Mammary epithelial cell (primary cell): ENCODE measurements at regions of chr15 and their contacts with region 1.

Region 1: DNA sequence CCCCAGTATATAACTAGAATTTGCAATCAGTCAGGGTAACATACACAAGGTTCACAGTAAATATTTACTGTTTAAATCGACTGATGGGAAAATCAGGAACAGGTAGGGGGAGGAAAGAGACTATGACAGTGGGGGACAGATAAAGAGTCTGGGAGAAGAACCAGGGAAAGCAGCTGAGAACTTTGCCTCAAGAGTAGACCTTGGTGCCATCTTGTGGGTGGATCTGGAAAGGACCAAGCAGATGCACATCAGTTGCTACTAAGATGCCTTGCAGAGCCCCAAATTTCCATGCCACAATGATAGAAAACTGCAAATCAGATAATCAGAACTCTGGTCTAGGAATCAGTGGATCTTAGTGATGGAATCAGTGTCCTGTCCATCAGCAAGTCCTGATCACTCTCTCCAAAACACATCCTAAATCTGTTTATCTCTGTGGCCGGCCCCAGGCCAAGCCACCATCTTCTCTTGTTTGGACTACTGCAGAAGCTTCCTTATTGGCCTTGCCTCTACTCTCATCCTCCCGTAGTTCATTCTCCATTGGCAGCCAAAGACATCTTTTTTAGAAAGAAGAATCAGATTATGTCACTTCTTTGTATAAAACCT is 62.7 kb downstream of the PDE8A start:
- DNase-seq: peak; percentile 40
- H3K4me3 ChIP-seq: no peak overlapping the region
- H3K27ac ChIP-seq: no peak overlapping the region
- H3K4me1 ChIP-seq: no peaks in the 10 kb centered on the region
- H3K27me3 ChIP-seq: no peaks in the 10 kb centered on the region
- CTCF ChIP-seq: peak; percentile 67 to 76

Region 2: DNA sequence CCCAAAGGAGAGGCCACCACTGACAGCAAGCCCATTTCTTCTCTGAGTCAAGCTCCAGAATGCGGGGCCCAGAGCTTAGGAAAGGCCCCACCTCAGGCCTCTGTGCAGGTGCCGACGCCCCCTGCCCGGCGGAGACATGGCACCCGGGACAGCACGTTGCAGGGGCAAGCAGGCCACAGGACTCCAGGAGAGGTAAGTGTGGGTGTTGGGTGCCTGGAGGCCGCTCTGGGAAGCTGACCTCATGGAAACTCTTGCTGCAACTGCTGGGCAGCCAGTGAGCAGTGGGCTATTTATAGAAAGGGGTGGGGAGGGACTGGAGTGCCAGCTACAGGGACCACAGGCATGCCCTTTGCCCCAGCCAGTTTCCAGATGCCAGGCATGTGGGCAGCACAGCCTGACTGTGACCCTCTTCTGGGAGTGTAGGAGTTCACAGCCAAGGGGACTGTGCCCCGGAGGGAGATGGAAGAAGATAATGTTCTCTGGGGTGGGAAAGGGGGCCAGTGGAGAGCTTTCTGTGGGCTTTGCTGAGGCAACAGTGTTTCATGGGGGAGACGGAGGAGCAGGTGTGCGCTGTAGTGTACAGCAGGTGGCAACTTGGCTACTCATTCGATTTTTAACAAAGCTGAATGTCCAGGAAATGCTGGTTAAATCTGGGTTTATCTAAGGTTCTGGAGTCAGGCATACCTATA is 203.5 kb before region 1 on chr15:
- CTCF ChIA-PET with region 1: no interaction called
- dilution Hi-C with region 1: no loop called
- in situ Hi-C with region 1: no loop called
- intact Hi-C with region 1: loop called (anchors 10 kb)
- DNase-seq: peak; percentile 12
- H3K4me3 ChIP-seq: no peak overlapping the region
- H3K27ac ChIP-seq: no peak overlapping the region
- H3K4me1 ChIP-seq: no peaks in the 10 kb centered on the region
- H3K27me3 ChIP-seq: no peaks in the 10 kb centered on the region
- CTCF ChIP-seq: no peak

Region 3: DNA sequence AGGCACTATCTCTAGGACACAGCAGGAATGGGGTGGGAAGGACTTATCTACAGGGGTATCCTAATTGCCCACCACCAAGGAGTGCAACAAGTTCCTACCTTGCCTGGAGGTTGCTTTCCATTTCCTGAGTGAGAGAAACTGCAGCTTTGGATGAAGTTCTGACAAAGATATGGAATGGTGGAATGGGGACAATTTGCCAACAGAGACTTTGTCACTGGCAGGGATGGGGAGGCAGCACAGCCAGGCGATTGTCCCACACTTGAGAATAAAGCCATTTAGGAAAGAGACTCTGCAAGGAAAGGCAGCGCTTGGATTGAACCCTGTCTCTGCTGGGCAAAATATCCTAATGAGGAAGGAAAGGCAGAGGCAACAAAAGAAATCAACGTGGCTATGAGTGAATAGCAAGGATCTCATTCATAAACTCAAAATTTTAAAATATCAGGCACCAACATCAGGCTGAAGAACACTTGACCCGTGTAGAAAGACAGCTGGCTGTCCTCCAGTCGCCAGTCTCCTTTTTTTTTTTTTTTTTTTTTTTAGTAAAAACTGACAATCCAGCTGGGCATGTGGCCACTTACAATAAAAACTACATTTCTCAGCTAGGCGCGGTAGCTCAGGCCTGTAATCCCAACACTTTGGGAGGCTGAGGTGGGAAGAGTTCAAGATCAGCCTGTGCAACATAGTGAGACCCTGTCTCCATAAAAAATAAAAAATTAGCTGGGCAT is 94.3 kb before region 1 on chr15:
- CTCF ChIA-PET with region 1: no interaction called
- dilution Hi-C with region 1: loop called (anchors 5 kb)
- in situ Hi-C with region 1: loop called in 1 of 2 experiments (anchors 5 kb)
- intact Hi-C with region 1: loop called (anchors 1 kb)
- DNase-seq: no peak
- H3K4me3 ChIP-seq: no peak overlapping the region
- H3K27ac ChIP-seq: no peak overlapping the region
- H3K4me1 ChIP-seq: peaks cover 8% of the 10 kb centered on the region
- H3K27me3 ChIP-seq: no peaks in the 10 kb centered on the region
- CTCF ChIP-seq: no peak

Region 4: DNA sequence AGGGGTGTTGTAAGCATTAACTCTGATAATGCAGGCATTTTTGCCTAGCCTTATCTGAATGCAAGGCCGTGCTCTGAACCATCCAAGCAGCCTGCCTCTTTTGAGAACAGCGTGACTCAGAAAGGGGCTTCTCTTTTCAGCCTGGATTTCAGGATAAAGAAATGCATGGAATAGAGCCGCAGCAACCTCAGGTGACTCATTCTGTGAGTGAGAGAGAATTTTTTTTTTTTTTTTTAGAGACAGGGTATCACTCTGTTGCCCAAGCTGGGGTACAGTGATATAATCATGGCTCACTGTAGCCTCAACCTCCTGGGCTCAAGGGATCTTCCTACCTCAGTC is 83.3 kb before region 1 on chr15:
- CTCF ChIA-PET with region 1: no interaction called
- dilution Hi-C with region 1: no loop called
- in situ Hi-C with region 1: loop called in 1 of 2 experiments (anchors 5 kb)
- intact Hi-C with region 1: no loop called
- DNase-seq: peak; percentile 44
- H3K4me3 ChIP-seq: no peak overlapping the region
- H3K27ac ChIP-seq: no peak overlapping the region
- H3K4me1 ChIP-seq: no peaks in the 10 kb centered on the region
- H3K27me3 ChIP-seq: no peaks in the 10 kb centered on the region
- CTCF ChIP-seq: no peak

Region 5: GRCh38 chr15:84981054-84981710 is 63.2 kb before region 1 on chr15:
- CTCF ChIA-PET with region 1: interaction called, 13 read pairs
- dilution Hi-C with region 1: no loop called
- in situ Hi-C with region 1: no loop called
- intact Hi-C with region 1: loop called (anchors 1 kb)
- DNase-seq: peak; percentile 99
- H3K4me3 ChIP-seq: peak overlapping the region; percentile 68 to 95 (median 75)
- H3K27ac ChIP-seq: peak overlapping the region; percentile 75
- H3K4me1 ChIP-seq: peaks cover 14% of the 10 kb centered on the region
- H3K27me3 ChIP-seq: no peaks in the 10 kb centered on the region
- CTCF ChIP-seq: peak in 1 of 2 donors; percentile 25

Region 6: GRCh38 chr15:85475317-85475701 is 431.0 kb after region 1 on chr15:
- CTCF ChIA-PET with region 1: no interaction called
- dilution Hi-C with region 1: no loop called
- in situ Hi-C with region 1: no loop called
- intact Hi-C with region 1: no loop called
- DNase-seq: no peak
- H3K4me3 ChIP-seq: no peak overlapping the region
- H3K27ac ChIP-seq: no peak overlapping the region
- H3K4me1 ChIP-seq: peaks cover 68% of the 10 kb centered on the region
- H3K27me3 ChIP-seq: no peaks in the 10 kb centered on the region
- CTCF ChIP-seq: no peak